ENCODE measurements at regions of chr11 and their contacts with region 1.

Region 1: DNA sequence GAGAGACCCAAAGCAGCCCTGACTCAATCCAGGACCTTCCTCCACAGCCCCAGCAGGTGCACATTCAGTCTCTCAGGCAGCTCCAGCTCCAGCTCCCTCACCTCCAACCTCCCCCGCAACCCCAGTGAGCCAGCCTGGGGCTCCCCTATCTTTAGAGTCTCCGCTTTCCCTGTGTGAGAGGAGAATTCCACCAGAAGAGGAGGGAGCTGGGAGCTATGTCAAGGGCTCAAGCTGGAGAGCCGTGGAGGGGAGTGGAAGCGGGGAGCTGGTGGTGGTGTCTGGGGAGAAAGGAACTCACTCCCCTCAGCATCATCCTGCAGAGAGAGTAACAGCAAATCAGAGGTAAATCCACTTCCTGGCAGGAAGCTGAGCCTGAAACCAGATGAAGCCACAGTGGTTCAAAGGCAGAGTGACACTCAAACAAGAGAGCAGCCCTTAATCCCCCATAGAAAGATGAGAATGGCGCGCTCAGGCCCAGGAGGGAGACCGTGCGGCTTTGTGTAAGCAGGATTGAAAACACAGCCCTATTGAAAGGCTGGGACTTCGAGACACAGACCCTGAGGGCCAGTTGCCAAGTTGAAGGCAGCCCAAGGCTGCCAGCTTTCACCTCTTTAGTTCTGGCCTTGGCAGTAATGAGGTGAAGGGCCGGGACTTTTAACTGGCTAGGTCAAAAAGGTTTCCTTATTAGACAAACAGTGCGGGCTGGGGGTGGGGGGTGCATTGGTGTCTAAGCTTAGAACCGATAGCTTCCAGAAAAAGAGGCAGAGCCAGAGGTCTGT is 21.4 kb upstream of the CDON start:
- DNase-seq: no peak
- H3K4me3 ChIP-seq: no peak overlapping the region
- H3K27ac ChIP-seq: no peak overlapping the region
- H3K4me1 ChIP-seq: peaks cover 24 to 43% (median 34%) of the 10 kb centered on the region in 4 experiments
- H3K27me3 ChIP-seq: no peaks in the 10 kb centered on the region; a peak in 1 of 7 replicates
- CTCF ChIP-seq: no peak
- EP300 ChIP-seq: no peak
- POLR2A ChIP-seq: no peak
- RAD21 ChIP-seq: no peak

Region 2: GRCh38 chr11:126072141-126072741 is 11.8 kb before region 1 on chr11:
- CTCF ChIA-PET with region 1: interaction called, 14 read pairs
- POLR2A ChIA-PET with region 1: interaction called, 6 read pairs
- DNase-seq: no peak
- H3K4me3 ChIP-seq: peak overlapping the region in 1 of 4 experiments; percentile 28; a peak in 1 of 8 replicates
- H3K27ac ChIP-seq: no peak overlapping the region
- H3K4me1 ChIP-seq: peaks cover 0 to 16% (median 3%) of the 10 kb centered on the region in 4 experiments; a peak in 4 of 7 replicates
- H3K27me3 ChIP-seq: no peaks in the 10 kb centered on the region
- CTCF ChIP-seq: no peak
- EP300 ChIP-seq: no peak
- POLR2A ChIP-seq: no peak
- RAD21 ChIP-seq: no peak

Region 3: GRCh38 chr11:126115816-126116331 is 31.9 kb after region 1 on chr11:
- CTCF ChIA-PET with region 1: interaction called, 19 read pairs
- POLR2A ChIA-PET with region 1: no interaction called
- DNase-seq: no peak
- H3K4me3 ChIP-seq: no peak overlapping the region
- H3K27ac ChIP-seq: no peak overlapping the region; the same call in 1 of the 2 replicates
- H3K4me1 ChIP-seq: peaks cover 0 to 7% (median 0%) of the 10 kb centered on the region in 4 experiments; a peak in 3 of 7 replicates
- H3K27me3 ChIP-seq: 0 out of 7 replicates have a peak, but pooled peaks cover 0 to 3% (median 0%) of the 10 kb centered on the region in 4 experiments
- CTCF ChIP-seq: peak in 2 of 3 experiments; percentile 8 to 20; a peak in 2 of 4 replicates
- EP300 ChIP-seq: no peak
- POLR2A ChIP-seq: no peak
- RAD21 ChIP-seq: peak in 1 of 2 experiments; percentile 16; a peak in 2 of 4 replicates

Region 4: DNA sequence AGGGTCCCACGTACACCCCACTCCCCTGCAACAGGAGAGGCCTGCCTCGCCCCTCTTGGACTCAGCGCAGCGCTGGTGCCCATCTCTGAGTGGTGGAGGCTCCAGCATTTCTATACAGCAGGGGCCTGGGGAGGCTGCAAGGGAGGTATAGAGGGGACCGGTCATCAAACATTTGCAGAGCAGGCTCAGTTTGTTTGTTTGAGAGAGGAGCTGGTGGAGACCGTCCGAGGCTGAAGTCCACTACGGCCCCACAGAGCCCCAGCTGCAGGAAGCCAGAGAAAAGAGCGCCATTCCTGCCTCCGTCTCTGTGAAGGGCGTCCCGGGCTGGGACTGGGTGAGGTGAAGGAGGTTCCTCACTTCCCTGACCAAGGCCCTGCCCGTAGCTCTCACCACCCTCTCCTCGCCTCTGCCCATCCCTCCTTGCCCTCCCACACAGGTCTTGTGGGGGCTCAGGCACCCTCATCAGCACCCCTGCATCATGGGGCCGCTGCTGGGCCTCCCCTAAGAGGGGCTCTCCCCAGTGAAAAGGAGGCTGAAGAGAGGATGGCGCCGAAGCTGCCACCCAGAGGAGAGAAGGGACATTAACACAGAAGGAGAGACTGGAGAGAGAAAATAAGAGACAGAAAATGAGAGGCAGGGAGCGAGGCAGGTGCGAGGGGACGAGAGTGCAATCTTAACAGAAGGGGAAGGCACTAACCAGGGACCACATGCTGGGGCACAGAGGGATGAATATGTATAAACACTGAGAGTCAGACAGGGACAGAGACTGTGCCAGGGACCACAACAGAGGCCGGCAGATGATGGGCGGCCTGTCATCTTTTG is 102.9 kb after region 1 on chr11:
- CTCF ChIA-PET with region 1: interaction called, 16 read pairs
- POLR2A ChIA-PET with region 1: no interaction called
- DNase-seq: no peak
- H3K4me3 ChIP-seq: no peak overlapping the region
- H3K27ac ChIP-seq: no peak overlapping the region
- H3K4me1 ChIP-seq: peaks cover 0 to 2% (median 0%) of the 10 kb centered on the region in 4 experiments; a peak in 1 of 7 replicates
- H3K27me3 ChIP-seq: no peaks in the 10 kb centered on the region
- CTCF ChIP-seq: peak; percentile 25 to 45 (median 32)
- EP300 ChIP-seq: no peak
- POLR2A ChIP-seq: no peak
- RAD21 ChIP-seq: peak; percentile 56 to 63

Region 5: GRCh38 chr11:126202646-126203359 is 118.8 kb after region 1 on chr11:
- CTCF ChIA-PET with region 1: no interaction called
- POLR2A ChIA-PET with region 1: no interaction called
- DNase-seq: no peak
- H3K4me3 ChIP-seq: no peak overlapping the region
- H3K27ac ChIP-seq: no peak overlapping the region
- H3K4me1 ChIP-seq: no peaks in the 10 kb centered on the region
- H3K27me3 ChIP-seq: no peaks in the 10 kb centered on the region
- CTCF ChIP-seq: no peak
- EP300 ChIP-seq: no peak
- POLR2A ChIP-seq: no peak
- RAD21 ChIP-seq: no peak

Measured in H1 (cell line).